Aorta (tissue), 5 donors: ENCODE measurements at regions of chr17 and their contacts with region 1.

Region 1: DNA sequence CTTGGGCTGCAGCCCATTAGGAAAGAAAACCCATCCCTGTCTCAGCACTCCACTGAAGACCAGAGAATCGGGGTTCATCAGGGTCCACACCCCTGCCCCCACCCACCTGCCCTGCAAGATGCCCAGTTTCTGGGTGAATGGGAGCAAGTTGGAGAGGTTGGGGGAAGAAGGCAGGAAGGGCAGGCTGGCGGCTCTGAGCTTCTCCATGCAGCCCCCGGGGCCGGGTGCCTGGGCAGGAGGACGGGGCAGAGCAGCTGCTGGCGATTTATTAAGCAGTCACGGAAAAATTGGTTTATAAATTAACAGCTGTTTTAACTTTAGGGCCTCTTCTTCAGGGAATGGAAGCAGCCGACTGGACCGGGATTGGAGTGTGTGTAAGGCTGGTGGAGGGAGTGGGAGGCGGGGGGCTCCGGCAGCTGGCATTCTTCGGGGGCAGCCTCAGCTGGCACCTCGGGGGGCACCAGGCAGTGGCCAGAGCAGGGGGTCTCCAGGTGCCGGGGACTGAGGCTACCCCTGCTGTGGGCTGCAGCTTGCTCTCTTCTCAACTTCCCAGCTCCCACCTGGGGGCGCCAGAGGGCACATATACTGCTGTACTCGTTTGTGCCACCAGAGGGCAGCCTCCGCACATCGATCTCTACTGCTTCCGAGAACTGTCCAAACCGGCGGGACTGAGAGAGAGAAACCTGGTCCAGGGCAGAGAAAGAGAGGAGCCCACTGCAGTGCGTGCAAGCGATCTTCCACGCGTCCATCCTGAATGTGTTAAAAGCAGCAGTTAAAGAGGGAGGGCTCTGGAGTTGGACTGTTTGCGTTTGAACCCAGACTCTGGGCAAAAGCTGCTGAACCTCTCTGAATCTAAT is 5.0 kb upstream of the PPP1R1B start:
- DNase-seq: peak; percentile 85 to 94
- ATAC-seq: peak; percentile 90
- H3K4me3 ChIP-seq: no peak overlapping the region
- H3K27ac ChIP-seq: no peak overlapping the region
- H3K4me1 ChIP-seq: no peaks in the 10 kb centered on the region
- H3K27me3 ChIP-seq: no peaks in the 10 kb centered on the region

Region 2: DNA sequence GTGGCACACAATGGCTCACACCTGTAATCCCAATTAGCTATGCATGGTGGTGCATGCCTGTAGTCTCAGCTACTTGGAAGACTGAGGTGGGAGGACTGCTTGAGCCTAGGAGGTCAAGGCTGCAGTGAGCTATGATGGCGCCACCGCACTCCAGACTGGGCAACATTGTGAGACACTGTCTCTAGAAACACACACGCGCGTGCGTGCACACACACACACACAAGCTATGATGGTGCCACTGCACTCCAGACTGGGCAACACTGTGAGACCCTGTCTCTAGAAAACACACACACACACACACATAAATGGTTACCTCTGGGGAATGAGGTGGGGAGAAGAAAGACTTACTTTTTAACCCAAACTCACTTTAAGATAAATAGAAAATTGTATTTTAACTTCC is 236.7 kb before region 1 on chr17:
- intact Hi-C with region 1: no loop called
- DNase-seq: no peak
- ATAC-seq: no peak
- H3K4me3 ChIP-seq: no peak overlapping the region
- H3K27ac ChIP-seq: no peak overlapping the region
- H3K4me1 ChIP-seq: no peaks in the 10 kb centered on the region
- H3K27me3 ChIP-seq: no peaks in the 10 kb centered on the region

Region 3: DNA sequence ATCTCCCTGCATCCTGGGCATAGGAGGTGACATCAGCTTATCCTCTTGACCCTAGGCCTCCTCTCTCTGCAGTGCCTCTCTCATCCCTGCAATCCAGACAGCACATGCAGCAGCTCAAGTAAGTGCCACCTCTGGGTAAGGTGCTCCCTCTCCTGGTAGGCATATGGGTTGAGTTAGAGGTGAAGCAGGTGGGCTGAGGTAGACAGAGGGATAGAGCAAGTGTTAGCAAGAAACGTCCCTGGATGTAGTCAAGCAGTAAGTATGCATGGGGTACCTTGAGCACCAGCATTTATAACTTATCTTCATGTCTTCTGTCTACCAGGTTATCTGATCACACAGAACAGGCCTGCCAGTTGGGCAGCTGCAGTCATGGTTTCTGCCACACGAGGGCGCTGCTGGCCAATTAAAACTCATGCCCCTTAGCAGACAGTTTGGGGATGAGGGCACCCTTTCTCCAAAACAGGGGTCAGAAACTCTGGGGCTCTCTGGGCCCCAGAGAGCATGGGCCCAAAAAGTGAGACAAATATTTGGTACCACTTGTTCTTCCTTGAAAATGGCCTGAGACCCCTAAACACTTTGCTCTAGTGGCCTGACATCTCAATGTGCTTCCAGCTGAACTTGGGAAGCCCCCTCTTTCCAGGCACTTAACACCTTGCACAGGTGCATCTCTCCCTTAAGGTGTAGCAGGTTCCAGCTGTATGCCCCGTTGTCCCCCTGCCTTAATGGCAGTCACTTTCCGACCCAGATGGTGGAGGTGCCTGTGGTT is 73.9 kb before region 1 on chr17:
- intact Hi-C with region 1: loop called in 1 of 2 experiments (anchors 1 kb)
- DNase-seq: peak; percentile 70 to 89
- ATAC-seq: peak; percentile 79
- H3K4me3 ChIP-seq: no peak overlapping the region
- H3K27ac ChIP-seq: no peak overlapping the region
- H3K4me1 ChIP-seq: no peaks in the 10 kb centered on the region
- H3K27me3 ChIP-seq: no peaks in the 10 kb centered on the region

Region 4: GRCh38 chr17:39668199-39668966 is 46.6 kb after region 1 on chr17 and contains the start of gene PNMT:
- intact Hi-C with region 1: loop called (anchors 2 to 5 kb)
- DNase-seq: peak; percentile 80 to 93
- ATAC-seq: no peak
- H3K4me3 ChIP-seq: no peak within 1 kb of the TSS
- H3K27ac ChIP-seq: peak within 1 kb of the TSS in 1 of 2 donors; percentile 15
- H3K4me1 ChIP-seq: no peaks in the 10 kb centered on the region
- H3K27me3 ChIP-seq: no peaks in the 10 kb centered on the region
- total RNA-seq, gene PNMT: 0.75 to 1.5 TPM

Region 5: DNA sequence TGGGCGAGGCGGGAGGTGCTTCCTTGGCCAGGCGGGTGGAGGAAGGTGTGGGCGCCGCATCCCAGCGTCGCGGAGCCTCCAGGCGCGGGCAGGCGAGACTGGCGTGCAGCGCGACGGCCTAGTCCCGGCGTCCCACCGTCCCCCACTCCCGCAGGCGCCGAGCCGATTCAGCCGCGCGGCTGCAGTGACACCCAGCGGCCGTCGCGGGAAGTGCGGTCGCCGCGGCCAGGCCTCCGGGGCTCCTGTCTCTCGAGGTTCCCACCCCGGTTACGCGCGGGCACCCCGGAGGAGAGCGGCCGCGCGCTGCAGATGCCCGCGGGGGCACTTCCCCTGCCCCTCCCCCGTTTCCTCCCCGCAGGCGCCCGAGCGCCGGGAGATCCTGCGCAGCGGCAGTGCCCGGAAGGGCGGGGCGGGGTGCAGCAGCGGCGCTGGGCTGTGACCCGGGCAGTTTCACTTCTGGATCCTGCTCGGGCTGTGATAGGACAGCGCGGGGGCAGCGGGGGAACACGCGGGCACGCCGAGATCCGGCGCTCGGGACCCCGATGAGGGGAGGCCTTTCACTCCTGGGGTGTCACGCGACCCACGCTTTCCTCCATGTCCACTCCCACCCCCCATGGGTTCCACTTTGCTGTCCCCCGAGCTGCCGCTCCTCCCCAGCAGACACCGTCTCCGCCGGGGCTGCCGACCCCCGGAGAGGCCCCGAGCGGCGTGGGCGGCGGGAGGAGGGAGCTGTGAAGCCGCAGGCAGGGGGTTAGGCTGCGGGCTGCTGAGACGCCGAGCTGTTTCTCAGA is 132.6 kb after region 1 on chr17:
- intact Hi-C with region 1: loop called (anchors 1 to 2 kb)
- DNase-seq: peak; percentile 97 to 98
- ATAC-seq: peak; percentile 95
- H3K4me3 ChIP-seq: peak overlapping the region; percentile 42 to 67
- H3K27ac ChIP-seq: peak overlapping the region; percentile 49 to 62
- H3K4me1 ChIP-seq: no peaks in the 10 kb centered on the region
- H3K27me3 ChIP-seq: no peaks in the 10 kb centered on the region

Region 6: GRCh38 chr17:39777534-39778365 is 156.0 kb after region 1 on chr17:
- intact Hi-C with region 1: no loop called
- DNase-seq: no peak
- ATAC-seq: no peak
- H3K4me3 ChIP-seq: no peak overlapping the region
- H3K27ac ChIP-seq: no peak overlapping the region
- H3K4me1 ChIP-seq: peaks cover 2% of the 10 kb centered on the region in 2 donors
- H3K27me3 ChIP-seq: no peaks in the 10 kb centered on the region